AG04450 (cell line): ENCODE measurements at regions of chrX and their contacts with region 1.

Region 1: GRCh38 chrX:130060122-130061069 is 49.9 kb downstream of the ELF4 start:
- DNase-seq: no peak
- H3K4me3 ChIP-seq: peak overlapping the region; percentile 59
- H3K27ac ChIP-seq: no peak overlapping the region
- H3K27me3 ChIP-seq: no peaks in the 10 kb centered on the region
- CTCF ChIP-seq: peak; percentile 69

Region 2: DNA sequence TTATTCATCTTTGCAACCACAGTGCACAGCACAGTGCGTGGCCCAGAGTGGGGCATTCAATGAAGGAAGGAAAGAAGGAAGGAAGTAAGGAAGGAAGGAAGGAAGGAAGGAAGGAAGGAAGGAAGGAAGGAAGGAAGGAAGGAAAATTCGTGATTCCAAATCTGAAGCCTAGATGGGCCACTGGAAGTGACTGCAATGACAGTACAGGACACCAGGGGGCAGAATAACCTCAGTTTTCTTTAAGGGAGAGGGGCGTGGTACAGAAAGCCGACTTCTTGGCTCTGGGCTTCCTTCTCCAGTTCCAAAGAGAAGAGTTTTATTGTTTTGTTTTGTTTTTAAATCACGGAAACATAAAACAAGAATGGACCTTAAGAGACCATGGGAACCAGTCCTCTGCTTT is 453.5 kb before region 1 on chrX:
- CTCF ChIA-PET with region 1: interaction called, 27 read pairs
- POLR2A ChIA-PET with region 1: no interaction called
- DNase-seq: no peak
- H3K4me3 ChIP-seq: no peak overlapping the region
- H3K27ac ChIP-seq: no peak overlapping the region
- H3K27me3 ChIP-seq: peaks cover 2% of the 10 kb centered on the region
- CTCF ChIP-seq: peak; percentile 61

Region 3: GRCh38 chrX:129925305-129926092 is 134.9 kb before region 1 on chrX:
- CTCF ChIA-PET with region 1: interaction called, 143 read pairs
- POLR2A ChIA-PET with region 1: interaction called, 3 read pairs
- DNase-seq: peak; percentile 53
- H3K4me3 ChIP-seq: no peak overlapping the region
- H3K27ac ChIP-seq: peak overlapping the region; percentile 52
- H3K27me3 ChIP-seq: no peaks in the 10 kb centered on the region
- CTCF ChIP-seq: peak; percentile 66

Region 4: DNA sequence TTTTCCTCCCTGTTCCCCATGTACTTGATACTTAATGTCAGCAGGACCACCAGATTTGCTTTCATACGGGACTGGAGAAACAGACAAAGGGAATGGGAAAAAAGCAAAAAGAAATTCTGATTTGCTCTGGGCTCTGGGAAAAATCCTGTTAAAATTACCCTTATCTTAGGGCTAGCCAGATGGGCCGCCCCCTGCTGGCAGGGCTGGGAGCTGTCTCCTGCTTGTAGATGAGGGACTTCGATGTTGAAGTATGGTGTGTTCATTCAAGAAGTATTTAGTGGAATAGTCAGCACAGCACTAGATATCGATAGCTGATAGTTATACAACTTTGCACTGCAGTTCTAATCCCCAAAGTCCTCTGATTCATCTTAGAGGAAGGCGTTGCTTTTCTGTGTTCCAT is 32.2 kb before region 1 on chrX:
- CTCF ChIA-PET with region 1: interaction called, 10 read pairs
- POLR2A ChIA-PET with region 1: no interaction called
- DNase-seq: peak; percentile 2
- H3K4me3 ChIP-seq: no peak overlapping the region
- H3K27ac ChIP-seq: no peak overlapping the region
- H3K27me3 ChIP-seq: no peaks in the 10 kb centered on the region
- CTCF ChIP-seq: peak; percentile 61

Region 5: DNA sequence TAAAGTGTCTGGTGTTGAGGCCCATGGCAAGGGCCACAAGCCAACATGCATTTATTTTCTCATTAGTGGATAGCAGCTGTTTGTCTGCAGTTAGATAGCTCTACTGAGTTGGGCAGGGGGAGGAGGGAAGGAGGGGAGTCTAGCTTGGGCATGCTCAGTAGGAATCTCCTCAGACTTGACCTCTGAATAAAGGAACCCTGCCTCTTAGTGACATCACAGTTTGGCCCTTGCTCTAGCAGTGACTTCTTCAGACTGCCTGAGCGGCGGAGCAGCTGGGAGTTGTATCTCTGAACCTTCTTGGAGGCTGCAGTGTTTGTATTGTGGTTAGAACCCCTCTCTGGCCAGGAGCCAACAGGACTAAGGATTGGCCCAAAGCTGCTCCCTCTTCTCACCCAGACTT is 20.5 kb before region 1 on chrX:
- CTCF ChIA-PET with region 1: interaction called, 14 read pairs
- POLR2A ChIA-PET with region 1: no interaction called
- DNase-seq: no peak
- H3K4me3 ChIP-seq: no peak overlapping the region
- H3K27ac ChIP-seq: no peak overlapping the region
- H3K27me3 ChIP-seq: no peaks in the 10 kb centered on the region
- CTCF ChIP-seq: no peak

Region 6: DNA sequence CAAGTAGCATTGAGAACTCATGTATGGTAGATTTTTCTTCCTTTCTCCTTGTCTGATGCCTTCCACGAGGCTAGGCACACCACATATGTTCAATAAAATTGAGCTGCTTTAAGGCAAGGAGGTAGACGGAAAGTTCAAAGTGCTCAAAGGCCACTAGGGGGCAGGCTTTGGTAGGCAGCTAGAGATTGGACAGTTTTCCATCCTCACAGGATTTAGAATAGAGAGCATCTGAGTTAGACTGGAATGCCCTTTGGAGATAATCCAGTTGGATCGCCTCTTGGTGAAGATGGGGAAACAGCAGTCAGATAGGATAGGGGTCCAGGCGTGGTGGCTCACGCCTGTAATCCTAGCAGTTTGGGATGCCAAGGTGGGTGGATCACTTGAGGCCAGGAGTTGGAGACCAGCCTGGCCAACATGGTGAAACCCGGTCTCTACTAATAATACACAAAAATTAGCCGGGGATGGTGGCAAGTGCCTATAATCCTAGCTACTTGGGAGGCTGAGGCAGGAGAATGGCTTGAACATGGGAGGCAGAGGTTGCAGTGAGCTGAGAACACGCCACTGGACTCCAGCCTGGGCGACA is 19.5 kb after region 1 on chrX:
- CTCF ChIA-PET with region 1: interaction called, 14 read pairs
- POLR2A ChIA-PET with region 1: no interaction called
- DNase-seq: peak; percentile 42
- H3K4me3 ChIP-seq: no peak overlapping the region
- H3K27ac ChIP-seq: no peak overlapping the region
- H3K27me3 ChIP-seq: no peaks in the 10 kb centered on the region
- CTCF ChIP-seq: peak; percentile 70

Region 7: GRCh38 chrX:130120746-130121504 is 60.5 kb after region 1 on chrX:
- CTCF ChIA-PET with region 1: interaction called, 12 read pairs
- POLR2A ChIA-PET with region 1: no interaction called
- DNase-seq: no peak
- H3K4me3 ChIP-seq: peak overlapping the region; percentile 45
- H3K27ac ChIP-seq: peak overlapping the region; percentile 21
- H3K27me3 ChIP-seq: no peaks in the 10 kb centered on the region
- CTCF ChIP-seq: peak; percentile 53

Region 8: DNA sequence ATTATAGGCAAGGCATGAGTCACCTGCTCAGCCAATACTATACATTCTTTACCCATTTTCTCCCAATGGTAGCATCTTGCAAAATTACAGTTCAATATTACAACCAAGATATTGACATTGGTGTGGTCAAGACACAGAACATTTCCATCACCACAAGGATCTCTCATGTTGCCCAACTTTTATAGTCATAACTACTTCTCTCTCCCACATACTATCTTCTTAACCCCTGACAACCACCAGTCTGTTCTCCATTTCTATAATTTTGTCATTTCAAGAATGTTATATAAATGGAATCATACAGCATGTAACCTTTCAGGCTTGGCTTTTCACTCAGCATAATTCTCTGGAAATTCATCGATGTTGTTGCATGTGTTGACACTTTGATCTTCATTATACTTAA is 697.7 kb after region 1 on chrX:
- CTCF ChIA-PET with region 1: no interaction called
- POLR2A ChIA-PET with region 1: no interaction called
- DNase-seq: no peak
- H3K4me3 ChIP-seq: no peak overlapping the region
- H3K27ac ChIP-seq: no peak overlapping the region
- H3K27me3 ChIP-seq: no peaks in the 10 kb centered on the region
- CTCF ChIP-seq: no peak